MCF 10A (cell line): ENCODE measurements at regions of chr12 and their contacts with region 1.

Region 1: DNA sequence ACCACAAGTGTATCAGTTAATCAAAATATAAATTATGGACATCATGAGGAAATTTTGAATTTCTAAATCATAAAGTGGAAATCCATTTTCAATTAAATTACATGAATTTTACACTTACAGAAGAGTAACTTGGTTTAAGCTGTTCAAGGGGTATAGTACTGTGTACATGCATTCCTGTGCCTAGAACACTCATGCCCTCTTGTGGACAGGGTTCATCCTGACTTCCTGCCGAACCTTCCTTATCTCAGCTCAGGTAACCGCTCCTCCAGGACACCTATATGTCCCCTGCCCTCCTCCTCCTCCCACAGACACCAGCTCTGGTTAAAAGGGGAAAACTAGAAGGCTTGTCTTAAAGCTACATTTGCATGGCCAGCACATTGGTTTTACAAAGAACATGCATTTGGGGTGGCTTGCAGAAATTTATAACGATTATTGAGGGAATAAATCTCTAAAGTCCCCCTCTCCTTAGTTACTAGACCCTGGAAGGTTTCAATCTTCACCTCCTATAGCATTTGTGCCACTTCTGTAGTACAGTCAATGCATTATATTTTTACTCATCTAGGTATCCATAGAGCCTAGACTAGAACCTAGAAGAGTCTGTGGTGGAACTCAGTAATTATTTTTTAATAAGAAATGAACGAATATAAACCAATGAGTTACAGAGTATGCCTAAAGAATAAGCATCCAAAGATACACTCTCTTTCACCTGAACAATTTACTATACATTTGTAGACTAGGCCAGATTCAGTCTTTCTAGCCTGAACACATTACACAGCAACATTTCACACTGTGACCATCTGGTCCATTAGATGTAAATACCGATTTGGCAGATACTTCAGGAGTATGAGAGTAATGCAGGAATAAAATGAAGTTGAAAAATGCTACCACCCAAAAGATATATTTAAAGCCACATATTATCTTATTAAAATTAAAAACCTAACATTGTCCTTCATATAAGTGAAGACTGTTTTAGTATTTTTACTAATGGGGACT is 345.6 kb downstream of the PAWR start:
- DNase-seq: peak; percentile 73
- H3K4me3 Mint-ChIP-seq: no peak overlapping the region
- H3K27ac Mint-ChIP-seq: no peak overlapping the region
- H3K4me1 Mint-ChIP-seq: no peaks in the 10 kb centered on the region
- H3K27me3 Mint-ChIP-seq: peaks cover 7% of the 10 kb centered on the region
- CTCF ChIP-seq: peak; percentile 70

Region 2: DNA sequence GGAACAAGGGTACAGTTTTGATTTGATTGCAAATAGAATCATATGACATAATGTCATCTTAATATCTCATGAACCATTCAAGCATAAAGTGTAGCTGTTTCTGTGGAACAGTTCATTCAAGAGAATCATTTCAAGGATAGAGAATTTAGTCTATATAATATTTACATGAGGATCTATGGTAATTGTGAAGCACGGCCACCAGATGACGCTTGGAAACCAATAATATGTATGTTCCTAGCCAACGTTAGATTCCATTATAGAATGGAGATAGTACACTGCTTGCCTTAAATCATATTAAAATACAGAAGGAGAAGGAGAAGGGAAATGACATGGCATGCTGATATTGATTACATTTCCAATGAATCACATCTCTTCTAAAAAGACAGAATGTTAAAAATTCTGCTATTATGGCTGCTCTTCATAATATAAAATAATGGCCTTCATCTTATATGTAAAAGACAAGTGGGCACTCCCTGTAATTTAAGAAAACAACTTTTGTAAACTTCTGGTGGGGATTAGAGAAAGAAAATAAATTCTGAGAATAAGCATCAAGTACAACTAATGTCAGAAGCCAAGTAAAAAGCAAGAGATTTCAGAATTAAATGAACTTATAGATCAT is 1163.5 kb before region 1 on chr12:
- CTCF ChIA-PET with region 1: interaction called, 4 read pairs
- POLR2A ChIA-PET with region 1: no interaction called
- intact Hi-C with region 1: loop called (anchors 1 kb)
- DNase-seq: peak; percentile 52
- H3K4me3 Mint-ChIP-seq: no peak overlapping the region
- H3K27ac Mint-ChIP-seq: no peak overlapping the region
- H3K4me1 Mint-ChIP-seq: peaks cover 7% of the 10 kb centered on the region
- H3K27me3 Mint-ChIP-seq: no peaks in the 10 kb centered on the region
- CTCF ChIP-seq: peak; percentile 75

Region 3: GRCh38 chr12:78470354-78471195 is 874.6 kb before region 1 on chr12:
- CTCF ChIA-PET with region 1: interaction called, 19 read pairs
- POLR2A ChIA-PET with region 1: no interaction called
- intact Hi-C with region 1: loop called (anchors 1 kb)
- DNase-seq: peak; percentile 62
- H3K4me3 Mint-ChIP-seq: no peak overlapping the region
- H3K27ac Mint-ChIP-seq: no peak overlapping the region
- H3K4me1 Mint-ChIP-seq: peaks cover 8% of the 10 kb centered on the region
- H3K27me3 Mint-ChIP-seq: no peaks in the 10 kb centered on the region
- CTCF ChIP-seq: peak; percentile 54

Region 4: GRCh38 chr12:79006306-79006705 is 338.8 kb before region 1 on chr12:
- CTCF ChIA-PET with region 1: interaction called, 3 read pairs
- POLR2A ChIA-PET with region 1: no interaction called
- intact Hi-C with region 1: loop called (anchors 2 kb)
- DNase-seq: peak; percentile 22
- H3K4me3 Mint-ChIP-seq: no peak overlapping the region
- H3K27ac Mint-ChIP-seq: no peak overlapping the region
- H3K4me1 Mint-ChIP-seq: no peaks in the 10 kb centered on the region
- H3K27me3 Mint-ChIP-seq: no peaks in the 10 kb centered on the region
- CTCF ChIP-seq: peak; percentile 49

Region 5: DNA sequence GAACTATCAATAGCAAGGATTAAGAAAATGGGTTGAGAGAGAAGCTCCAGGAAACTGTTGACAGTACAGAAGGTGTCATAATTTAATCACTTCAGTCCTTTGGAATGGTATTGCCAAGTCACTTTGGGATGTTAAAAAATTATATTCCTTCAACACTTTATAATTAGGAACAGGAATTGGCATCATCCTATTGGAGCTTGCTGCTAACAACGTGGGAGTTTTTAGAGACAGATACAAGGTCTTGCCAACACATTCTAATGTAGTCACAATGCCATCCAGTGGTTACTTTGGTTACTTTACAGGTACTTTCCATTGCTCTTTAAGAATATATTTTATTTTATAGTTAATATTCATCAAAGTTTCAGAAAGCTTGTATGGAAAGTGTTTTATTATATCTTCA is 170.5 kb before region 1 on chr12:
- CTCF ChIA-PET with region 1: interaction called, 19 read pairs
- POLR2A ChIA-PET with region 1: no interaction called
- intact Hi-C with region 1: loop called (anchors 10 kb)
- DNase-seq: peak; percentile 50
- H3K4me3 Mint-ChIP-seq: no peak overlapping the region
- H3K27ac Mint-ChIP-seq: no peak overlapping the region
- H3K4me1 Mint-ChIP-seq: no peaks in the 10 kb centered on the region
- H3K27me3 Mint-ChIP-seq: no peaks in the 10 kb centered on the region
- CTCF ChIP-seq: peak; percentile 49

Region 6: GRCh38 chr12:79373896-79374499 is 28.8 kb after region 1 on chr12:
- CTCF ChIA-PET with region 1: interaction called, 13 read pairs
- POLR2A ChIA-PET with region 1: no interaction called
- intact Hi-C with region 1: no loop called
- DNase-seq: peak; percentile 49
- H3K4me3 Mint-ChIP-seq: no peak overlapping the region
- H3K27ac Mint-ChIP-seq: no peak overlapping the region
- H3K4me1 Mint-ChIP-seq: peaks cover 5% of the 10 kb centered on the region
- H3K27me3 Mint-ChIP-seq: no peaks in the 10 kb centered on the region
- CTCF ChIP-seq: peak; percentile 73

Region 7: DNA sequence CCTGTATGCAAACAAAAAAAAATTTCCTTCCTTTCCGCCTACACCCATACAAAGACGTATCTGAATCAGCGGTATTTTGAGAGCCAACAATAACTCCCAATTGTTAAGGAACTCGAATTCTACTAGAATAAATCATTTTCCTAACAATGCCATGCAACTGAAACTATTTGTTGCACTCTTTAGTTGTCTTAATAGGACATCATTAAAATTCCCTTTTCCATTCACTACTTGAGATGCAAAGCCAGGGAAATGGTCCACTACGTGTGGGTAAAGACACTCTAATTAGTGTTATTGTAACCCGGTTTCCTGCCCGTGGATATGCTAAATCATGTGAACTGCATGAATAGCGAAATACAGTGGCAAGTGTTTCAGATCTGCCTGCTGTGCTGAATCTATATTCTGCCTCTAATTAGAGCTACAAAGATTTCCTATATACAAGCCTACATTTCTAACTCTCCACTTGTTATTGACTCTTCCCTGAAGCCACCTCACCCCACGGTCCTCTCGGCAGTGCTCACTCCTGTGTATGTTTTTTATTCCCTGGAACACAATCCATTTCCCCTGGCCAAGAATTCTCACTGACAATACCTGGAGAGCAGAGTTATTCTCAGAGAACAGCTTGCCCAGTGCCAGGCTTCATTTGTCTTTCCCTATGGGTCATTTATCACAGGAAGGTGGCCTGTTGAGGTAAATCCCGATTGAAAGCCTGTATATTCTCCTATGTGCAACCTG is 177.3 kb after region 1 on chr12:
- CTCF ChIA-PET with region 1: no interaction called
- POLR2A ChIA-PET with region 1: no interaction called
- intact Hi-C with region 1: no loop called
- DNase-seq: no peak
- H3K4me3 Mint-ChIP-seq: no peak overlapping the region
- H3K27ac Mint-ChIP-seq: peak overlapping the region; percentile 64
- H3K4me1 Mint-ChIP-seq: no peaks in the 10 kb centered on the region
- H3K27me3 Mint-ChIP-seq: no peaks in the 10 kb centered on the region
- CTCF ChIP-seq: no peak